Caco-2 (cell line): ENCODE measurements at regions of chr17 and their contacts with region 1.

Region 1: GRCh38 chr17:69282002-69282401 is 44.9 kb downstream of the ABCA5 start:
- DNase-seq: no peak
- H3K4me3 ChIP-seq: no peak overlapping the region
- H3K4me3 Mint-ChIP-seq: no peak overlapping the region
- H3K27ac Mint-ChIP-seq: no peak overlapping the region
- H3K4me1 ChIP-seq: no peaks in the 10 kb centered on the region
- H3K4me1 Mint-ChIP-seq: no peaks in the 10 kb centered on the region
- H3K27me3 ChIP-seq: no peaks in the 10 kb centered on the region
- H3K27me3 Mint-ChIP-seq: no peaks in the 10 kb centered on the region
- CTCF ChIP-seq: no peak

Region 2: DNA sequence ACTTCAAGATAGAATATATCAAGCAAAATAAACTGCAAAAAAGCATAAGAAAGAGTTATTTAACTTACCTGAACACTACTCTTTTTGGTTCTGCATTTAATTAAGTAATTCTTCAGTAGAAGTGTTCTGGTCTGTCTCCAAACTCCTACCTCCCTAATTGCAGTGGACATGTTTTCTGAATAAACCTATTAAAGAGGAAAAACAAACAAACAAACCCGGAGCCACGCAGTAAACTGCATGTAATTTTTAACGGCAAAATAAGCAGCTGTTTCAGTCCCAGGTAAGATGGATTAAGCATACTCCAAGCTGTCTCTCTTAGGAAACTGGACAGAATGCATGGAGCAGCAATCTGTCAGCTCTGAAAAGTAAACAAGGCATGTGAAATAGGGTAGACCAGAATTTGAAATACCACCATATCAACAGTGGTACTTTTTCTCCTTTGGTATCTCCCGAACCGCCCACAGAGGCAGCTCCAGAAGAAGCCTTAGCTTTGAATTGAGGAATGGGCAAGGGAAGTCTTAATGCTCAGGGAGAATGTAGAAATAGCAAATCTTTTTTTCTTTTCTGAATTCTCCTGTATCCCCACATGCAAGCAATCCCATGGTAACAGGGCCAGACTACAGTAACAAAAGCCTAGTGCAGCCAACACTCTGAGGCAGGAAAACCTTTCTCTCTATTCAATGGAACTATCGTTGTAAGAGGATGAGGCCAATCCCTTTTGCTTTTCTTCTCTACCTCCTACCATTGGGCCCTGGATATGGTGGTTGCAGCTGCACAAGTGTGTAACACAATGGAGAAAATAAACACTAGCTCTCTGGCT is 32.5 kb after region 1 on chr17:
- CTCF ChIA-PET with region 1: no interaction called
- POLR2A ChIA-PET with region 1: no interaction called
- intact Hi-C with region 1: no loop called
- DNase-seq: no peak
- H3K4me3 ChIP-seq: no peak overlapping the region
- H3K4me3 Mint-ChIP-seq: no peak overlapping the region
- H3K27ac Mint-ChIP-seq: no peak overlapping the region
- H3K4me1 ChIP-seq: no peaks in the 10 kb centered on the region
- H3K4me1 Mint-ChIP-seq: no peaks in the 10 kb centered on the region
- H3K27me3 ChIP-seq: no peaks in the 10 kb centered on the region
- H3K27me3 Mint-ChIP-seq: no peaks in the 10 kb centered on the region
- CTCF ChIP-seq: no peak

Region 3: DNA sequence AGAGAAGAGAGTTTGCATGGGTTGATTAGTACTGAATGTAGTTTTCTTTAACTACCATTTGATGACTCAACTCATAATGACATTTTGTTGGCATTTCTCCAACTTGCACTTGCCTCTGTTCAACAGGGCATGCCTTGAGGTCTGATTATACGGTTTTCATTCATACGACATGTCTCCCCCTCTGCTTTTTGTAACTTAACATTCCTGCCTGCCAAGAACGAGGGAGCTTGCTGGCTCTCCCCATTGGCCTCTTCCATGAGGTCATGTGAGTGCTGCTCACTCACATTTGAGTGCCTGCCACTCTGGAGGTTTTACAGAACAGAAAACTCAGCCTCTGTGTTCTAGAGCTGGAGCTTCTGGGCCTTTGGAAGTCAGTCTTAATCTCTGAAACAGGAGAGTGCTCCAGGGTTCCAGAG is 152.2 kb after region 1 on chr17:
- CTCF ChIA-PET with region 1: no interaction called
- POLR2A ChIA-PET with region 1: interaction called, 10 read pairs
- intact Hi-C with region 1: no loop called
- DNase-seq: no peak
- H3K4me3 ChIP-seq: no peak overlapping the region
- H3K4me3 Mint-ChIP-seq: no peak overlapping the region
- H3K27ac Mint-ChIP-seq: no peak overlapping the region
- H3K4me1 ChIP-seq: no peaks in the 10 kb centered on the region
- H3K4me1 Mint-ChIP-seq: peaks cover 10% of the 10 kb centered on the region
- H3K27me3 ChIP-seq: no peaks in the 10 kb centered on the region
- H3K27me3 Mint-ChIP-seq: no peaks in the 10 kb centered on the region
- CTCF ChIP-seq: no peak